B cell (primary cell): ENCODE measurements at regions of chr6 and their contacts with region 1.

Region 1: DNA sequence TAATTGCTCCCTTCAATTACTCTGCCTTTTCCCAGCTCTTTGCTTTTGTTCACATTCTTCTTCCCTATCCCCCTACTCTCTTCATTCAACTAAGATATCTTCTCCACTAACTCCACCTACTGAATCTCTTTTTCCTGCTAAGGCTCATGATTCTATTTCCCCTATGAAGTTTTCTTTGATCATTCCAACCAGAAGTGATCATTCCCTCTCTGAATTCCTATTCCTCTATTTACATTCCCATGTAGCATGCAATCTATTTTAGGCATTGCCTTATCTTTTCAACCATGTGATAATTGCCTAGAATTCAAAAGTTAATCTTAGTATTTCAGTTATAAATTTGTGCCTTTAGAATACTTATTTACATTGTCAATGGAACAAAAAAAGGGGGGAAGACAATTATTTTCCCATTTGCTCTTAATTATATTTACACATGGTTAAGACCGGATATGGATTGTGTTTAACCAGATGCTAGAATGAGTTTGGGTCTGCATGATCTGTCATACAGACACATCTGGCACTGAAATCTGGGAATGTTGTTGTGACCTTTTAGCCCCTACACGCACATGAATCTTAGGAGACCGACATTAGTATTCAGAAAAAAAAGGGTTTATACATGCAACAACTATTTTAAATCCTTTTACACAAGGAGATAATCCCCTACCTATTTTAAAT is 20.8 kb downstream of the MOXD1 start:
- DNase-seq: no peak
- ATAC-seq: no peak
- H3K4me3 ChIP-seq: no peak overlapping the region
- H3K4me3 Mint-ChIP-seq: no peak overlapping the region
- H3K27ac ChIP-seq: no peak overlapping the region
- H3K27ac Mint-ChIP-seq: no peak overlapping the region
- H3K4me1 ChIP-seq: peaks cover 4 to 14% of the 10 kb centered on the region in 2 donors
- H3K4me1 Mint-ChIP-seq: peaks cover 19% of the 10 kb centered on the region
- H3K27me3 ChIP-seq: no peaks in the 10 kb centered on the region
- H3K27me3 Mint-ChIP-seq: no peaks in the 10 kb centered on the region
- CTCF ChIP-seq: no peak

Region 2: DNA sequence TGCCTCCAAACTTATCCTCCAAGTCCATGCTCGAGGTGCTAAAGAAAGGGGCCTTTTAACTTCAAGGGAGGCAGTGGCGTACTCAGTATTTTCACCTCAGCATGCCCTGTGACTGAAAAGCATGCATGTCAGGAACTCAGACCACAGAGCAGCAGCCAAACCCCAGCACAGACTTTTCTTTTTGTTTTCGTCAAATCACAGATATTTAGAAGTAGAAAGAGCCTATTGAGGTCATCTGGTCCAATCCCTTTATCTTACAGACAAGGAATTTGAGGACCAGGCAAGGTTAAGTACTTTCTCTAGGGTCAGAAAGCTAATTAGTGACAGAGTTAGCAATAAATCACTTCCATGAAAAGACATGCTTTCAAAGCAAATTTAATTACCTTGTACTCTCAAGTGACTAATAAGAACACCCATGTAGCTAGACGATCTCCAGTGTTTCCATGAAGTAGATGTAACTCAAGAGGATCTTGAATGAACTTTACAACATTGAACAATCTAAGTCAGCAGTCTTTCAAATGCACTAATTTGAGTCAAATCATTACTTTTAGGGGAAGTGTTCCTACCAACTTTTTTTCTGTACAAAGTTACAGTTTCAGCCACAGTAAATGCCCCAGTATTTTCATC is 15.1 kb before region 1 on chr6:
- CTCF ChIA-PET with region 1: interaction called, 10 read pairs
- POLR2A ChIA-PET with region 1: no interaction called
- intact Hi-C with region 1: loop called (anchors 1 kb)
- DNase-seq: peak; percentile 45
- ATAC-seq: peak; percentile 63
- H3K4me3 ChIP-seq: peak overlapping the region in 1 of 5 experiments; percentile 21
- H3K4me3 Mint-ChIP-seq: peak overlapping the region; percentile 71
- H3K27ac ChIP-seq: peak overlapping the region; percentile 57 to 70
- H3K27ac Mint-ChIP-seq: peak overlapping the region; percentile 86
- H3K4me1 ChIP-seq: peaks cover 29 to 52% of the 10 kb centered on the region in 2 donors
- H3K4me1 Mint-ChIP-seq: peaks cover 55% of the 10 kb centered on the region
- H3K27me3 ChIP-seq: no peaks in the 10 kb centered on the region
- H3K27me3 Mint-ChIP-seq: no peaks in the 10 kb centered on the region
- CTCF ChIP-seq: no peak

Region 3: GRCh38 chr6:132456700-132457143 is 76.2 kb after region 1 on chr6:
- CTCF ChIA-PET with region 1: no interaction called
- POLR2A ChIA-PET with region 1: no interaction called
- intact Hi-C with region 1: no loop called
- DNase-seq: no peak
- ATAC-seq: no peak
- H3K4me3 ChIP-seq: no peak overlapping the region
- H3K4me3 Mint-ChIP-seq: no peak overlapping the region
- H3K27ac ChIP-seq: peak overlapping the region in 1 of 2 donors; percentile 51
- H3K27ac Mint-ChIP-seq: peak overlapping the region; percentile 85
- H3K4me1 ChIP-seq: peaks cover 0 to 14% of the 10 kb centered on the region in 2 donors
- H3K4me1 Mint-ChIP-seq: peaks cover 38% of the 10 kb centered on the region
- H3K27me3 ChIP-seq: no peaks in the 10 kb centered on the region
- H3K27me3 Mint-ChIP-seq: no peaks in the 10 kb centered on the region
- CTCF ChIP-seq: no peak

Region 4: GRCh38 chr6:132931941-132932514 is 551.5 kb after region 1 on chr6:
- CTCF ChIA-PET with region 1: no interaction called
- POLR2A ChIA-PET with region 1: no interaction called
- intact Hi-C with region 1: no loop called
- DNase-seq: no peak
- ATAC-seq: no peak
- H3K4me3 ChIP-seq: no peak overlapping the region
- H3K4me3 Mint-ChIP-seq: no peak overlapping the region
- H3K27ac ChIP-seq: no peak overlapping the region
- H3K27ac Mint-ChIP-seq: no peak overlapping the region
- H3K4me1 ChIP-seq: no peaks in the 10 kb centered on the region
- H3K4me1 Mint-ChIP-seq: no peaks in the 10 kb centered on the region
- H3K27me3 ChIP-seq: peaks cover 0 to 4% (median 0%) of the 10 kb centered on the region in 4 experiments
- H3K27me3 Mint-ChIP-seq: peaks cover 32% of the 10 kb centered on the region
- CTCF ChIP-seq: no peak